ENCODE measurements at regions of chr1 and their contacts with region 1.

Region 1: DNA sequence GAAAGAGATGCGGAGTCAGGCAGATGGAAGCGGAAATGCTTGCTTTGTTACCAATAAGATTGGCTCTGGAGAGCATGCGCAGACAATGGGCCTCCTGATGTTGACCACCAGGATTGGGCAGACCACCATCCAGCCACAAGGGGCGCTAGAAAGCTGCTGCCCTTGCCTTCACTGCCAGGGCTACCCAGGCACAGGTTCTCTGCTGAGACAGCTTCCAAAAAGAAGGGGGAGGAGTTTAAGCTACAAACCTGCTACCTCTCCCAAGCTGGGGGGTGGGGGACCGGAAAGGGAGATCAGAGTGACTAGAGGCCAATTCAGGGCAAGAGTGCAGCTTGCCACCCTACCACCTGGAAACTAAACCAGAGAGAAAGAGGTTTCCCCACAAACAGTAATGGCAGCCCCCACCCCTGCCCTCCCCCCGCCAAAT is 369.7 kb downstream of the RRAGC start:
- DNase-seq: no peak
- H3K4me3 ChIP-seq: no peak overlapping the region
- H3K27ac ChIP-seq: no peak overlapping the region
- H3K4me1 ChIP-seq: no peaks in the 10 kb centered on the region
- H3K27me3 ChIP-seq: no peaks in the 10 kb centered on the region
- CTCF ChIP-seq: peak; percentile 49 to 59

Region 2: GRCh38 chr1:38221006-38221649 is 268.7 kb before region 1 on chr1:
- CTCF ChIA-PET with region 1: no interaction called
- dilution Hi-C with region 1: no loop called
- in situ Hi-C with region 1: no loop called
- intact Hi-C with region 1: no loop called
- DNase-seq: peak; percentile 48
- H3K4me3 ChIP-seq: no peak overlapping the region
- H3K27ac ChIP-seq: no peak overlapping the region
- H3K4me1 ChIP-seq: peaks cover 9% of the 10 kb centered on the region
- H3K27me3 ChIP-seq: no peaks in the 10 kb centered on the region
- CTCF ChIP-seq: no peak

Region 3: GRCh38 chr1:38403667-38404066 is 86.2 kb before region 1 on chr1:
- CTCF ChIA-PET with region 1: no interaction called
- dilution Hi-C with region 1: no loop called
- in situ Hi-C with region 1: no loop called
- intact Hi-C with region 1: no loop called
- DNase-seq: no peak
- H3K4me3 ChIP-seq: no peak overlapping the region
- H3K27ac ChIP-seq: no peak overlapping the region
- H3K4me1 ChIP-seq: no peaks in the 10 kb centered on the region
- H3K27me3 ChIP-seq: no peaks in the 10 kb centered on the region
- CTCF ChIP-seq: no peak

Region 4: DNA sequence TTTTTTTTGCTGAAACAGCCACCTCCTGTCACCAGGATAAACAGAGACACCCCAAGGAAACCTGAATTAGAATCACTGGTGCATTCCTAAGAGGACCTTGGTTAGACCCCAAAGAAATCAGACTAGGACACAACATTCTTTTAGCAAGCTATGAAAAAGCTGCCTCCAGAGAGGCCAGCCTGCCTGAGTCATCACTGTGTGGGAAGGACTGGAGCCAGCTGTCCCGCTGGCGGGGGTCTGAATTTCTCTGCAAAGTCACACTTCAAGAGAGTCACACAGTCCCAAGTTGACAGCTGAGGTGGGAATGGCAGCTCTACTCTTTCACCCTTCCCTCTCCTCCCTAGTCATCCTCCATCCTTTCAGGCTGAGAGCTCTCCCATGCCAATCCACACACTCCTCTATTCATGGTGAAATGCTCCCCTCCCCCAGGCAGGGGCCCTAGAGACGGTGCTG is 38.3 kb before region 1 on chr1:
- CTCF ChIA-PET with region 1: interaction called, 18 read pairs
- dilution Hi-C with region 1: no loop called
- in situ Hi-C with region 1: no loop called
- intact Hi-C with region 1: no loop called
- DNase-seq: no peak
- H3K4me3 ChIP-seq: no peak overlapping the region
- H3K27ac ChIP-seq: no peak overlapping the region
- H3K4me1 ChIP-seq: no peaks in the 10 kb centered on the region
- H3K27me3 ChIP-seq: no peaks in the 10 kb centered on the region
- CTCF ChIP-seq: no peak

Region 5: DNA sequence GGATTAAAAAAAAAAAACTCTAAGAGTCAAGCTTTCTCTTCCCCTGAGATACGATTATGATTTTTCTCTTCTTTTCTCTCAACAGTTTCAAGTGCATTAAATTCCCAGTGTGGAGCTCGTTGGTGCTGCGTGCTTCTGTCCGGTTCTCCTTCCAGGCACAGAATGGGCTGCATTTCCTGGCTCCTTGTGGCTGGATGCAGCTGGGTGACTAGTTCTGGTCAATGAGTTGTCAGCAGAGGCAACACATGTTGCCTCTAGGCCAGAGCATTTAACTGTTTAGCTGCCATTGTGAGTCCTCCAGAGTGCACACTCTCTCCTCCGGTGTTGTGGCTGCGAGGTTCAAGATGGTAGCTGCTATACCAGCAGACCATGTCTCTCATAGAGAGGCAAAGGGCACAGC is 56.8 kb after region 1 on chr1:
- CTCF ChIA-PET with region 1: no interaction called
- dilution Hi-C with region 1: no loop called
- in situ Hi-C with region 1: loop called in 1 of 2 experiments (anchors 10 kb)
- intact Hi-C with region 1: no loop called
- DNase-seq: no peak
- H3K4me3 ChIP-seq: no peak overlapping the region
- H3K27ac ChIP-seq: no peak overlapping the region
- H3K4me1 ChIP-seq: no peaks in the 10 kb centered on the region
- H3K27me3 ChIP-seq: peaks cover 2% of the 10 kb centered on the region
- CTCF ChIP-seq: no peak

Measured in mammary epithelial cell (primary cell).